Activated CD4-positive, alpha-beta memory T cell treated with anti-CD3 and anti-CD28 coated beads for 36 hours (primary cell): ENCODE measurements at regions of chr1 and their contacts with region 1.

Region 1: DNA sequence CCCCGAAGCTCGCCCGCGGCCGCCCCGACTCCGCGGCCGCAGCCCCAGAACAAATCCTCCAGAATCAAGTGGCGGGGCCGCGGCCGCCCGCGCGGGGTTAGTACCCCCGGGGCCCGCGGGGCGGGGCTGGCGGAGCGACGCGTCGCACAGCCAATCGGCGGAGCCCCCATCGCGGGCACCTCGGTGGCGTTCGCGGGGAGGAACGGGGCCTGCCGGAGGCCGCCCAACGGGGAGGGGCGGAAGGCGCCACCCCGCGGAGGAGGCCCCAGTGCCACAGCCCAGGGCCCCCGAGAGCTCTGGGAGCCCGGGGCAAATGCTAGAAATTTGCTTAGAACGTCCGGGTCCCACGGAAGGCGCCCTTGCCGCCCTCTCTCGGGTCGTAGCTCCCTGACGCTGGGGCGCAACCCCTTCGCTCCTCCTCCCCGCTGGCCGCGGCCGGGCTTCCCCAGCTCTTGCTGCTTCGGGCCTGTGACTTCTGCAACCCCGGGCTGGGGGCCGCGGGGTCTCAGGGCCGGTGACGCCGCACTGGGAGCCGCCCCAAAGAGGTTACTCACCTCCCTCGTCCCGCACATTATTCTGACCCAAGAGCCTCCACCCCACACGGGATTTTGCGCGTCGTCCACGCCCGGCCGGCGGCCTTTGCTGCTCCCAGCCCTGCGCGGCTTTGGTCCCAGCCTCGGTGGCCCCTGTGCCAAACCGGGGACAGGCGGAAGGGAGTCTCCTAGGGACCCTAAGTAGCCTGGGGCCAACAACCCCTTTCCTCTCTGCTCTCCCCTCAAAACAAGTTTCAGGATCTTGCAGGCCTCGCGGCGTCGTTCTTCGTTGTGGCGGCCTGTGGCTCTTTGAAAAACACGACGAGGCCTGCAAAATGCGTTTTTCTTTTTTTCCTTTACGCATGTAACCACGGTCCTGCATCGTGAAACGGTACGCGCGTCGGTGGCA is at the start of gene RUNX3:
- DNase-seq: peak; percentile 94
- H3K4me3 Mint-ChIP-seq: peak within 1 kb of the TSS; percentile 81
- H3K27ac Mint-ChIP-seq: peak within 1 kb of the TSS; percentile 91
- H3K4me1 Mint-ChIP-seq: peaks cover 64% of the 10 kb centered on the region
- H3K27me3 Mint-ChIP-seq: no peaks in the 10 kb centered on the region
- total RNA-seq, gene RUNX3: 153 to 155 TPM

Region 2: DNA sequence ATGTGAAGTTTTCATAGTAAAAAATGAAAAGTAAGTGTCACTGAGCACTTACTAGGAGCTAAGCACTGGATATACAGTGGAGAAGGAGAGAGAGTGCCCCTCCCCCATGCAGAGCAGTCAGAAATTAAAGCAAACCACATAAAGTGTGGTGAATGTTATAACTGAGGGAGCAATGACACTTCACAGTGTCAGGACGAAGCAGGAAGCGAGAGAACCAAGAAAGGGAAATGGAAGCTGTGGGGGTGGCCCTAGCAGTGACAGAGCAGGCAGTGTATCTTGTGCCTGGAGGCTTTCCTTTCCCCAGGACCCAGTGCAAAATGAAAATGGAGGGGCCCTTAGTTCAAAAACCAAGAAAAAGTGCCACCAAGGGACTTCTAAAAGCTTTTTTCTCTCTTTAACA is 449.4 kb before region 1 on chr1:
- CTCF ChIA-PET with region 1: no interaction called
- POLR2A ChIA-PET with region 1: no interaction called
- intact Hi-C with region 1: loop called (anchors 10 kb)
- DNase-seq: peak; percentile 83
- H3K4me3 Mint-ChIP-seq: peak overlapping the region; percentile 58
- H3K27ac Mint-ChIP-seq: peak overlapping the region; percentile 97
- H3K4me1 Mint-ChIP-seq: peaks cover 60% of the 10 kb centered on the region
- H3K27me3 Mint-ChIP-seq: no peaks in the 10 kb centered on the region

Region 3: DNA sequence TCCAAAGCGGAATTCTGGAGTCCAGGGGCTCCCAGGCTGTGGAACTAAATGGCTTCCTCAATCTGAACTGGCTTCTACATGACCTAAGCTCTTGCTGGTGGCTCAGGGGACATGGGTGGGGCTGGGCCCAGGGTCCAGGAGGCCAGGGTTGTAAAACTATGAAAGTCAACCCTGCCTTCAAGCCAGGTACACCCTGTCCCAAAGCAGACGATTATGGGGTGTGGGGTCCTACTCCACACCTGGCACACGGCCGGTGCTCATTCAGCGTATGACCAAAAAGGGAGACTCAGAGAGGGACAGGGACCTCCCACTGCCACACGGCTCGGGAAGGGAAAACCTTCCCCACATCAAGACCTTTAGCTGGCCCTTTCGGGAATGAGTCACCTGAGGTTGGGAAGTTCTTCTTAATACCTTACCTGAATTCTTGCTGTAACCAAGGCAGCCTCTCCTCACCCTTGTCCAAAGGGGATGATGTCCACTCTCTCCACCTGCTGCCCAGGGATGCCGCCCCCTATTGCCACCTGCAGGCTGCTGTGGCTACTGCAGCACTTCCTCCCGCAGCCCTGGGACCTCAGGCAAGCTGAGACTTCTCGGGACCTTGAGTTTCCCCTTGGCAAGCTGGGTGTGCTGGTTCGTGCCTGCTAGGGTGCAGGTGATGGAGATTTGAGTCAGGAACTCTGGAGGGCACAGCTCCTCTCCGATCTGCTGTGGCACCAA is 32.5 kb before region 1 on chr1:
- CTCF ChIA-PET with region 1: no interaction called
- POLR2A ChIA-PET with region 1: no interaction called
- intact Hi-C with region 1: no loop called
- DNase-seq: peak; percentile 69
- H3K4me3 Mint-ChIP-seq: no peak overlapping the region
- H3K27ac Mint-ChIP-seq: no peak overlapping the region
- H3K4me1 Mint-ChIP-seq: peaks cover 23% of the 10 kb centered on the region
- H3K27me3 Mint-ChIP-seq: no peaks in the 10 kb centered on the region

Region 4: DNA sequence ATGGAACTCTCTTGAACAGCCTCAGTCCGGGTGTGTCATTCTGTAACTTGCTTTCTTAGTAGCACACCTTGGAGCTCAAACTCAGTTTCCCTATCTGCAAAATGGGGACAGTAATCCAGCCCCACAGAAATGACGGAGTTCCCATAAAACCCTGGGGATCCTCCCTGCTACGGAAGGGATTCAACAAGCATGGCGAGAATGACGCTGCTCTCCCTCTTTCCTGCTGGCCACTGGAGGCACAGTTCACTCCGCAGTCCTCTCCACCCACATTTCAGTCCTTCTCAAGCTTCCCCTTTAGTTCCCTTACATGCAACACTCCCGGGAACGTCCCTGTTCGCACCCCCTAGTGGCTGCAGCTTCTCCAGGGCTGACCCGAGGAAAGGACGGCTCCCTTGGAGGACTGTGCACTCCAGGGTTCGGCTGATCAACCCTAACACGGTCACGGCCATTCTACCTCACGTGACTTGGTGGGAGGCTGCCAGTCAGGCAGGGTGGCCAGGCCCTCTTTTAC is 21.0 kb before region 1 on chr1:
- CTCF ChIA-PET with region 1: interaction called, 6 read pairs
- POLR2A ChIA-PET with region 1: interaction called, 69 read pairs
- intact Hi-C with region 1: loop called (anchors 1 kb)
- DNase-seq: no peak
- H3K4me3 Mint-ChIP-seq: no peak overlapping the region
- H3K27ac Mint-ChIP-seq: peak overlapping the region; percentile 81
- H3K4me1 Mint-ChIP-seq: peaks cover 52% of the 10 kb centered on the region
- H3K27me3 Mint-ChIP-seq: no peaks in the 10 kb centered on the region

Region 5: GRCh38 chr1:24946861-24947658 is 16.6 kb after region 1 on chr1:
- CTCF ChIA-PET with region 1: interaction called, 29 read pairs
- POLR2A ChIA-PET with region 1: interaction called, 10 read pairs
- intact Hi-C with region 1: no loop called
- DNase-seq: peak; percentile 43
- H3K4me3 Mint-ChIP-seq: no peak overlapping the region
- H3K27ac Mint-ChIP-seq: peak overlapping the region; percentile 10
- H3K4me1 Mint-ChIP-seq: peaks cover 41% of the 10 kb centered on the region
- H3K27me3 Mint-ChIP-seq: no peaks in the 10 kb centered on the region

Region 6: GRCh38 chr1:24964811-24965570 is 34.5 kb after region 1 on chr1:
- CTCF ChIA-PET with region 1: interaction called, 40 read pairs
- POLR2A ChIA-PET with region 1: interaction called, 12 read pairs
- intact Hi-C with region 1: loop called (anchors 1 kb)
- DNase-seq: peak; percentile 97
- H3K4me3 Mint-ChIP-seq: peak overlapping the region; percentile 93
- H3K27ac Mint-ChIP-seq: peak overlapping the region; percentile 97
- H3K4me1 Mint-ChIP-seq: peaks cover 78% of the 10 kb centered on the region
- H3K27me3 Mint-ChIP-seq: no peaks in the 10 kb centered on the region

Region 7: GRCh38 chr1:25099343-25099951 is 169.0 kb after region 1 on chr1:
- CTCF ChIA-PET with region 1: interaction called, 44 read pairs
- POLR2A ChIA-PET with region 1: no interaction called
- intact Hi-C with region 1: loop called (anchors 5 kb)
- DNase-seq: peak; percentile 59
- H3K4me3 Mint-ChIP-seq: no peak overlapping the region
- H3K27ac Mint-ChIP-seq: no peak overlapping the region
- H3K4me1 Mint-ChIP-seq: peaks cover 50% of the 10 kb centered on the region
- H3K27me3 Mint-ChIP-seq: peaks cover 2% of the 10 kb centered on the region